ENCODE measurements at regions of chr20 and their contacts with region 1.

Region 1: GRCh38 chr20:19784511-19785172 is 26.6 kb downstream of the RIN2 start:
- DNase-seq: peak; percentile 55
- CTCF ChIP-seq: peak; percentile 67

Region 2: DNA sequence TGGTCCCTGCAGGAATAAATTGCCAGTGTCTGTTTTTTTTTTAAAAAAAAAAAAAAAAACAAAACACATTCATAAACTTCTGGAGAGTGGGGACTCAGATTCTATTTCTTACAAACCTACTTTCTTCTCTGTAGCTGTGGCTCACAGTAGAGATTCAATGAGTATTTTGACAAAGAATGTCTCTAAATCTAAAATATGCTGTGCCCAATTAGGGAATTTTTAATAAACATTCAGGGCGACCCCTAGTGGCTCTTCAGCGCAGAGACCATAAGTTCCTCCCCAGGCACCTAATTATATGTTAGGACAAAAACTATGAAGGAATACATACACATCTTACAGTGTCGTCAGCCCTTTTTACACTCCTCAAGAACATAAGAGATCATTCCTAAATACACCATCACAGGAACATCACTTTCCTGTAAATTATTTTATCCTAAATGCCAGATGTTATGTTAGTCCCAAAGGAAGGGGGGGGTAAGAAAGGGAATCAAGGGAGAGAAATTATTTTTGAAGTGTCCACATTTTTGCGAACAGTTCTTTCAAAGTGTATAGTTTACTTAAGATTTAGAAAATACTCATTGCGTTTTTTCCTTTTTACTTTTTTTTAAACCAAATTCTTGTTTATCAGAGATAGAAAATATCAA is 210.7 kb after region 1 on chr20:
- in situ Hi-C with region 1: loop called (anchors 10 kb)
- DNase-seq: peak; percentile 62
- CTCF ChIP-seq: peak; percentile 82

Measured in GM13977 (cell line).